Activated CD4-positive, alpha-beta memory T cell treated with anti-CD3 and anti-CD28 coated beads for 36 hours (primary cell): ENCODE measurements at regions of chr9 and their contacts with region 1.

Region 1: DNA sequence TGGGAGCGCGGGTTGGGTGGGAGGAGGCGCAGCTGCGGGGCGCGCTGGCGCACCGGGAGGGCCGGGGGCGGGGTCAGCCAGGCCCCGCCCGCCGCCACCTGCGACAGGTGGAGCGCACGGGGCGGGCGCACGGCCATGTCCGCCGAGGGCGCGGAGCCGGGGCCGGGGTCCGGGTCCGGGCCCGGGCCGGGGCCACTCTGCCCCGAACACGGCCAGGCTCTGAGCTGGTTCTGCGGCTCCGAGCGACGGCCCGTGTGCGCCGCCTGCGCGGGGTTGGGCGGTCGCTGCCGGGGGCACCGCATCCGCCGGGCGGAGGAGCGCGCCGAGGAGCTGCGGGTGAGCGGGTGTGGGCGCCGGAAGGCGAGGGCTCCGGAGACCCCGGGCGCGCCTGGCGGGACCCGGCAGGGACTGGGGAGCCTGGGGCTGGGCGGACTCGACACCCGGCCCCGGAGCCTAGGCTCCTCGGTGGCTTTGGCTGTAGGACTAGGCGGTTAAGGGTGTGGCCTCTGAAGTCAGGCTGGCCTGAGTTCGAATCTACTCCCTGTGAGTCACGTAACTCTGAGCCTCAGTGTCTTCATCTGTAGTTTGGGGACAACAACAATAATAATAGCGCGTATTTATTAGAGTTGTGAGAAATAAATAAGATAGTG is at the start of gene BSPRY:
- DNase-seq: peak; percentile 41
- H3K4me3 Mint-ChIP-seq: peak within 1 kb of the TSS; percentile 77
- H3K27ac Mint-ChIP-seq: peak within 1 kb of the TSS; percentile 69
- H3K4me1 Mint-ChIP-seq: peaks cover 56% of the 10 kb centered on the region
- H3K27me3 Mint-ChIP-seq: peaks cover 32% of the 10 kb centered on the region
- total RNA-seq, gene BSPRY: 7.6 to 8.5 TPM

Region 2: GRCh38 chr9:112104901-112105300 is 1244.7 kb before region 1 on chr9:
- CTCF ChIA-PET with region 1: no interaction called
- POLR2A ChIA-PET with region 1: no interaction called
- intact Hi-C with region 1: loop called (anchors 10 kb)
- DNase-seq: no peak
- H3K4me3 Mint-ChIP-seq: no peak overlapping the region
- H3K27ac Mint-ChIP-seq: no peak overlapping the region
- H3K4me1 Mint-ChIP-seq: no peaks in the 10 kb centered on the region
- H3K27me3 Mint-ChIP-seq: no peaks in the 10 kb centered on the region

Region 3: DNA sequence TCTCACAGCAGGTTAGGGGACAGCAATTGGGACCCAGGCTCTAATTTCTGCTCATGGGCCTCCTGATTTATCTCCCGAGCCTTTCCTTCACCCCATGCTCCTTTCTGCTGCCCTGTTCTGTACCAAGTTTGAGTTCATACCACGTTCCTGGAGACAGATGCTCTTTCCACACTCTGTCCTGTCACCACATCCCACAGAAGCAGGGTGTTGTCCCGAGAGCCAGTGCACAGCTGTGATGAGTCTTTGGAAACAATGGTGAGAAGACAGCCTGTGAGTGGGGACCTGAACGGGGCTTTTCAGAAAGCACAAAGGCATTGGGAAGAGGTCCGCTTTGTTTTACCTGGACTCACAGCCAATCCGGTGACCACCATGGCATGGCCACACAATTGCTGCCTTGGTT is 26.9 kb before region 1 on chr9:
- CTCF ChIA-PET with region 1: no interaction called
- POLR2A ChIA-PET with region 1: no interaction called
- intact Hi-C with region 1: no loop called
- DNase-seq: no peak
- H3K4me3 Mint-ChIP-seq: no peak overlapping the region
- H3K27ac Mint-ChIP-seq: no peak overlapping the region
- H3K4me1 Mint-ChIP-seq: no peaks in the 10 kb centered on the region
- H3K27me3 Mint-ChIP-seq: no peaks in the 10 kb centered on the region

Region 4: DNA sequence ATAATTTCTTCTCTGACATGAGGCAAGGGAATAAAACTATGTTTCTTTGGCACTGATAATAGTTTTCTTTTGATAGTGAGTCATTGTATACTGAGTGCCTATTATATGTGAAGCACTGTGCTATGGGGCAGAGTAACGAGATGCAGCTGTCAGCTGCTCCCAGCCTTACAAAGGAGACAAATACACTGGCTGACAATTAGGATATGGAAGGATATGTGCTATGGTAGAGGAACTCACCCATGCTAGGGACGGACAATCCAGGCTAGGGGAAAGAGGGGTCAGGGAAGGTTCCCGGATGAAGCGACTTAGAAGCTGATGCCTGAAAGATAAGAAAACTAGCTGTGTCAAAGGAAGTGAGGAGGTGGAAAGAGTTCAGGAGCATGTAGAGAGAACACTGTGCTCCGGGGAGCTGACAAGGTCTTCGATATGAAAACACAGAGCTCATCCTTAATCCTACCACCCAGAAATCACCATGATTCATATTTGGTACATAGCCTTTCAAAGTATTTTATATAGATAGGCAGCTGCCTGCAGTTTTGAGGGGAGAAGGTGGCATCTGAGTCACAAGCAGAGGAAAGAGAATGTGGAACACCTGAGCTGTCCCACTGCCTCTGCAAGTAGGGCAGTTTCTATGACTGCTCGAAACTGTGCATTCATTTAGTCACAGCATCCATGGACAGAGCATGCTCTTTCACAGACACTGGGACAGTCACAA is 11.9 kb after region 1 on chr9:
- CTCF ChIA-PET with region 1: interaction called, 7 read pairs
- POLR2A ChIA-PET with region 1: interaction called, 24 read pairs
- intact Hi-C with region 1: loop called (anchors 1 kb)
- DNase-seq: peak; percentile 57
- H3K4me3 Mint-ChIP-seq: no peak overlapping the region
- H3K27ac Mint-ChIP-seq: peak overlapping the region; percentile 55
- H3K4me1 Mint-ChIP-seq: peaks cover 11% of the 10 kb centered on the region
- H3K27me3 Mint-ChIP-seq: peaks cover 5% of the 10 kb centered on the region